OCI-LY7 (cell line): ENCODE measurements at regions of chr5 and their contacts with region 1.

Region 1: DNA sequence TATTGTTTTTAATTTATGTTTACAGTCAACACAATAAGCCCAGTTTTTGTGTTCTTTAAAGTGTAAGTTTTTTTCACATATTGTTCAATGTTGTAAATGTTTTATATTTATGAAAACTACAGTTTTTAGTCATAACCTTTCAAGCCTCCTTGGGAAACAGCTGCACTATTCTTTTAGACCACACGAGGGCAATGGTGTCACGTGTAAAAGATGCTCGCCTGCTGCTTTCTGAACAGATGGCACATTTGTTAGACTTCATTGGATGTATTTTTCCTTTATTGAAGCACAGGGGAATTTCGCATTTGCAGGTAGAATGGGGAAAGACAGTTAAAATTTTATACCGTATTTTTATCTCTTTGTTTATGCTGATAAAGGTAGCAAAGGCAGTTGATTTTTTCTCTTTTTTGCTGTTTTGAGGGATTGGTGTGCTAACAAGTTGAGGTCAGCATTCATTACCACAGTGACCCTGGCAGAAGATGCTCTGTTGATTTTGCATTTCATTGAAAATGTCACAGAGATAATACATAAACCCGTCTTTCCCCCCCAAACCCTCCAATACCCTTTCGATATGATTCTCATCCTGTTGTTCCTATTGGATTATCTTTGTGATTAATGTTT is 59.0 kb downstream of the MAT2B start:
- DNase-seq: peak; percentile 53
- H3K4me3 ChIP-seq: no peak overlapping the region
- H3K27ac ChIP-seq: no peak overlapping the region
- H3K4me1 ChIP-seq: no peaks in the 10 kb centered on the region
- CTCF ChIP-seq: peak; percentile 95

Region 2: DNA sequence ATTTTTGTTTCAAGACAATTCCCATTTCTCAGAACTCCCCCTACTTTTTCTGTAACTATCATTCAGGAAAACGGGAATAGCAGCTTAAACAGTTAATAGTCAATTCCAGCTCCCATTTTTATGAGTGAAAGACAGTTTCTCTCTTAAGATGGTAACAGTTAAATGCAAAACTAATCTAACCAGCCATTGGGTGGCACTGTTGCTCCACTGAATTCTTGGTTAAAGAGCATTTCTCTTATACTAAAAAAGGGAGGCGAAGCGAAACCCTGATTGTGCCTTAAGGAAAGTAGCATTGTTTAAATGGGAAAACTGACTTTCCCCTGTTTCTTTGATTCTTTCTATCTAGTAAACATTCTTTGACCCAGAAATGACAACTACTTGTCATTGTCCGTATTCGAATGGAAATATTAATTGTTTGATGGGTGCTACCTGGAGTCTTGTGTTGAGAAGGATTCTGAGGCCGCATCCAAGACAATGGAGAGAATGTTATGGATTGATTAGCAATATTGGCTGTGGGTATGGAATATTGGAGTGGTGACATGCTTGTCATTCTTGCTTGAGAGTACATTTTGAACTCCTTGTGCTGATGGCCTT is 448.7 kb after region 1 on chr5:
- CTCF ChIA-PET with region 1: no interaction called
- POLR2A ChIA-PET with region 1: no interaction called
- intact Hi-C with region 1: loop called (anchors 5 kb)
- DNase-seq: peak; percentile 68
- H3K4me3 ChIP-seq: no peak overlapping the region
- H3K27ac ChIP-seq: no peak overlapping the region
- H3K4me1 ChIP-seq: peaks cover 4% of the 10 kb centered on the region
- CTCF ChIP-seq: peak; percentile 89

Region 3: DNA sequence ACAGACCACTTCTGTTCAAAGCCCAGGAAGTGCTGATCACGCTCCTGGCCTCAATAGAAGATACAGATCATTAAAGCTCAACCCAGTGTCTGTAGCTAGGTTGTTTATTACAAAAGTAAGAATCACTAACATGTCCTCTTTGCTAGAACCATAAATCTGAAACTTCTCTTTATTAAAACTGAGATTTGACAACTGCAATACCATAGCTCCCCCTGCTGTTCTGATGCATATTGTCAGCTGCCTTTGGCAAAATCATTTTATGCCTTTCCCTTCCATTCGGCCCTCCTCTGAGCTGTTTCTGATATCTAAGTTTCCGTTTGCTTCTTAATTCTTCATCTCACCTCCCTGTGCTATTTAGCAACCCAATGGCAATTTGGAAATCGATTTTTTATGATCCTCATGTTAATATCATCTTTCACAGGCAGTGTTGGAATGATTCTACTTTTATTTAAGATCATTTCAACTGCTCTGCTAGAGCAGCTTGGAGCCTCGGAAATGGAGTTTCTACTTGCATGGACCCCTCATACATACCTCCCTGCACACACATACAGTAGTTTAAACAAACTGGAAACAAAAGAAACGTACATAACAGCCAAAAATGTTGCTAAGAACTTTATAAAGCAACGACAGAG is 939.8 kb after region 1 on chr5:
- CTCF ChIA-PET with region 1: no interaction called
- POLR2A ChIA-PET with region 1: no interaction called
- intact Hi-C with region 1: loop called (anchors 1 kb)
- DNase-seq: peak; percentile 55
- H3K4me3 ChIP-seq: no peak overlapping the region
- H3K27ac ChIP-seq: no peak overlapping the region
- H3K4me1 ChIP-seq: no peaks in the 10 kb centered on the region
- CTCF ChIP-seq: peak; percentile 86

Region 4: GRCh38 chr5:165209086-165209727 is 1644.8 kb after region 1 on chr5:
- CTCF ChIA-PET with region 1: no interaction called
- POLR2A ChIA-PET with region 1: no interaction called
- intact Hi-C with region 1: loop called (anchors 5 kb)
- DNase-seq: peak; percentile 16
- H3K4me3 ChIP-seq: no peak overlapping the region
- H3K27ac ChIP-seq: no peak overlapping the region
- H3K4me1 ChIP-seq: no peaks in the 10 kb centered on the region
- CTCF ChIP-seq: peak; percentile 96